Activated T-helper 2 cell treated with anti-CD3 and anti-CD28 coated beads, Interferon-gamma antibody, Interleukin-2, Interleukin-4, amounts not matched to agents 10 μg/mL and 5 μg/mL and 100 μg/mL, durations not matched to agents 14 hours and 24 hours and 36 hours (primary cell): ENCODE measurements at regions of chr14 and their contacts with region 1.

Region 1: GRCh38 chr14:33859306-33859705 is 91.6 kb downstream of the EGLN3 start:
- DNase-seq: no peak
- H3K4me3 Mint-ChIP-seq: no peak overlapping the region
- H3K27ac Mint-ChIP-seq: no peak overlapping the region
- H3K4me1 Mint-ChIP-seq: peaks cover 45% of the 10 kb centered on the region
- H3K27me3 Mint-ChIP-seq: peaks cover 27% of the 10 kb centered on the region

Region 2: GRCh38 chr14:33534632-33535031 is 324.7 kb before region 1 on chr14:
- intact Hi-C with region 1: no loop called
- DNase-seq: no peak
- H3K4me3 Mint-ChIP-seq: no peak overlapping the region
- H3K27ac Mint-ChIP-seq: no peak overlapping the region
- H3K4me1 Mint-ChIP-seq: no peaks in the 10 kb centered on the region
- H3K27me3 Mint-ChIP-seq: no peaks in the 10 kb centered on the region

Region 3: GRCh38 chr14:34227834-34228649 is 368.7 kb after region 1 on chr14:
- intact Hi-C with region 1: loop called (anchors 5 kb)
- DNase-seq: peak; percentile 50
- H3K4me3 Mint-ChIP-seq: peak overlapping the region; percentile 35
- H3K27ac Mint-ChIP-seq: no peak overlapping the region
- H3K4me1 Mint-ChIP-seq: peaks cover 20% of the 10 kb centered on the region
- H3K27me3 Mint-ChIP-seq: peaks cover 37% of the 10 kb centered on the region